Activated CD8-positive, alpha-beta T cell treated with anti-CD3 and anti-CD28 coated beads, Interleukin-2, amount 10 ng/mL, durations not matched to agents 7 days and 5 days (primary cell): ENCODE measurements at regions of chr21 and their contacts with region 1.

Region 1: GRCh38 chr21:42238185-42238934 is 19.4 kb downstream of the ABCG1 start:
- DNase-seq: peak; percentile 68
- ATAC-seq: peak; percentile 41
- H3K4me3 Mint-ChIP-seq: peak overlapping the region; percentile 47
- H3K27ac Mint-ChIP-seq: peak overlapping the region; percentile 75
- H3K4me1 Mint-ChIP-seq: peaks cover 62% of the 10 kb centered on the region
- H3K27me3 Mint-ChIP-seq: no peaks in the 10 kb centered on the region

Region 2: GRCh38 chr21:42187976-42188653 is 50.2 kb before region 1 on chr21:
- CTCF ChIA-PET with region 1: interaction called, 47 read pairs
- POLR2A ChIA-PET with region 1: interaction called, 31 read pairs
- DNase-seq: peak; percentile 93
- ATAC-seq: peak; percentile 95
- H3K4me3 Mint-ChIP-seq: peak overlapping the region; percentile 53
- H3K27ac Mint-ChIP-seq: peak overlapping the region; percentile 94
- H3K4me1 Mint-ChIP-seq: peaks cover 76% of the 10 kb centered on the region
- H3K27me3 Mint-ChIP-seq: peaks cover 6% of the 10 kb centered on the region

Region 3: GRCh38 chr21:42193131-42193671 is 45.2 kb before region 1 on chr21:
- CTCF ChIA-PET with region 1: interaction called, 47 read pairs
- POLR2A ChIA-PET with region 1: interaction called, 31 read pairs
- DNase-seq: peak; percentile 87
- ATAC-seq: peak; percentile 60
- H3K4me3 Mint-ChIP-seq: peak overlapping the region; percentile 16
- H3K27ac Mint-ChIP-seq: peak overlapping the region; percentile 71
- H3K4me1 Mint-ChIP-seq: peaks cover 77% of the 10 kb centered on the region
- H3K27me3 Mint-ChIP-seq: peaks cover 10% of the 10 kb centered on the region

Region 4: GRCh38 chr21:42227909-42228708 is 10.3 kb before region 1 on chr21:
- CTCF ChIA-PET with region 1: interaction called, 26 read pairs
- POLR2A ChIA-PET with region 1: interaction called, 21 read pairs
- DNase-seq: peak; percentile 94
- ATAC-seq: peak; percentile 98
- H3K4me3 Mint-ChIP-seq: peak overlapping the region; percentile 32
- H3K27ac Mint-ChIP-seq: peak overlapping the region; percentile 71
- H3K4me1 Mint-ChIP-seq: peaks cover 69% of the 10 kb centered on the region
- H3K27me3 Mint-ChIP-seq: no peaks in the 10 kb centered on the region

Region 5: DNA sequence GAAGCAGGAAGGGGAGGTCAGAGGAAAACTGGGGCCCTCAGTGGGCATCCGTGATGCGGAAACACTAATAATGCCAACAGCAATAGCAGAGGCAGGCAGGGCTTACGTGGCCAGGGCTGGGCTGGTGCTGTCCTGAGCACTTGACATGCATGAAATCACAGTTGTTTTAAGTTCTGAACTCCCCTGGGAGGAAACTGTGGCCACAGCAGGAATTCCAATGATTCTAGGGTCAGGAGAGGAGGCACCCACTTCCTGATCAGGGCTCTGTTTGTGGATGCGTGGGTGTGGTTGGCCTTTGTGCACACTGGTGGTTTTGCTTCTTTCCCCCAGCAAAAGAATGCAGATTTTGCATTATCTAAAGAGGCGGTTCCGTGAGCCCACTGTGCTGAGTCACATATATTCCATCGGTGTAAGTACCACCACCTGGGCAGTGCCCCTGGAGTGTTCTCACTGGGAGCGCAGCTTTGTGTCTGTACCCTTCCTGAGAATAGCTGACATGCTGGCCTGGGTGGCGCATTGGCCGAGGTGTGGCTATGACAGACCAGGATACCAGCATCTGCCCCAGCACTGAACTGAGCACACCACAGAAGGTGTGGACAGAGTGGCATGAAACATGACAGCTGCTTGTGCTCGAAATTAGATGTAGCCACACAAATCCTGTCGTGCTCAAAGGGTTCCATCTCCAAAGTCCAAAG is 486.0 kb after region 1 on chr21:
- CTCF ChIA-PET with region 1: no interaction called
- POLR2A ChIA-PET with region 1: no interaction called
- DNase-seq: no peak
- ATAC-seq: no peak
- H3K4me3 Mint-ChIP-seq: no peak overlapping the region
- H3K27ac Mint-ChIP-seq: no peak overlapping the region
- H3K4me1 Mint-ChIP-seq: peaks cover 22% of the 10 kb centered on the region
- H3K27me3 Mint-ChIP-seq: no peaks in the 10 kb centered on the region